ENCODE measurements at regions of chr18 and their contacts with region 1.

Region 1: GRCh38 chr18:13260197-13260934 is 41.8 kb downstream of the LDLRAD4 start:
- DNase-seq: no peak
- H3K4me3 ChIP-seq: no peak overlapping the region
- H3K27ac ChIP-seq: no peak overlapping the region
- H3K4me1 ChIP-seq: peaks cover 3% of the 10 kb centered on the region
- H3K27me3 ChIP-seq: no peaks in the 10 kb centered on the region
- CTCF ChIP-seq: no peak
- EP300 ChIP-seq: no peak
- POLR2A ChIP-seq: no peak

Region 2: GRCh38 chr18:13221869-13222855 is 38.2 kb before region 1 on chr18:
- intact Hi-C with region 1: loop called in 1 of 4 experiments (anchors 5 kb)
- DNase-seq: peak in 1 of 5 donors; percentile 43
- H3K4me3 ChIP-seq: no peak overlapping the region
- H3K27ac ChIP-seq: no peak overlapping the region
- H3K4me1 ChIP-seq: peaks cover 1% of the 10 kb centered on the region
- H3K27me3 ChIP-seq: no peaks in the 10 kb centered on the region
- CTCF ChIP-seq: no peak
- EP300 ChIP-seq: no peak
- POLR2A ChIP-seq: no peak